ENCODE measurements at regions of chr7 and their contacts with region 1.

Region 1: DNA sequence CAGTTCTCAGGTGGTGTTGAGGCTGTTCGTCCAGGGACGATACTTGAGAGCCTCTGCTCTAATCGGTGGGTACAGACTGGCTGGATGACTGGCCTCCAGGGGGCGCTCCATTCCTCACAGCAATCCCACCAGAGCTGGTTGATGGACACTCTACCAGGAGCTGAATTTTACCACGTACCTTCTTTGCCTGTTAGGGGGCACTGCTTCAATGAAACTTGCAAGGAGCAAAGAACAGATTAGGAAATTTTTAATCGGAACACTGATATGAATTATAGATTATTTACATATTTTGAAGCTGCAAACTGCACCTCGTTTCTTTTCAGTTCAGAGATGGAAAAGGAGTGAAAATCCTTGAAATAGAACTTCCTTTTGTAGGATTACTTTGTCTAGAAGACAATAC is 44.9 kb downstream of the KBTBD2 start:
- DNase-seq: peak; percentile 97
- ATAC-seq: peak; percentile 100
- H3K4me3 Mint-ChIP-seq: no peak overlapping the region
- H3K27ac Mint-ChIP-seq: peak overlapping the region; percentile 4
- H3K4me1 Mint-ChIP-seq: peaks cover 10% of the 10 kb centered on the region
- H3K27me3 Mint-ChIP-seq: peaks cover 19% of the 10 kb centered on the region
- CTCF ChIP-seq: peak; percentile 92

Region 2: DNA sequence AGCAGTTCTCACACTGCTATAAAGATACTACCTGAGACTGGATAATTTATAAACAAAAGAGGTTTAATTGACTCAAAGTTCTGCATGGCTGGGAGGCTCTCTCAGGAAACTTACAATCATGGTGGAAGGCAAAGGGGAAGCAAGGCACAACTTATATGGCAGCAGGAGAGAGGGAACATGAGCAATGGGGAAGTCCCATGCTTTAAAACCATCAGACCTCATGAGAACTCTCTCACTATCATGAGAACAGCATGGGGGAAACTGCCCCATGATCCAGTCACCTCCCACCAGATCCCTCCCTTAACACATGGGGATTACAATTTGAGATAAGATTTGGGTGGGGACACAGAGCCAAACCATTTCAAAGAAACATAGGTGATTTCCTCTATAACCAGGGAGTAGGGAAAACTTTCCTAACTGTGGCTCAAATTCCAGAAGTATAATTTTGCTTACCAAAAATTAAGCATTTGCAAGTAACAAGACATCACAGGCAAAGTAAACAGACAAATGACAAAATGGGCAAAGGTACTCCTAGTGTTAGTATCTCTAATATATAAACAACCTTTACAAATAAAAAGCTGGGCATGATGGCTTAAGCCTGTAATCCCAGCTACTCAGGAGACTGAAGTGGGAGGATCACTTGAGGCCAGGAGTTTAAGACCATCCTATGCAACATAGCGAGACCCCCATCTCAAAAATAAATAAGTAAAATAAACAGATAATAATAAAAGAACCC is 43.1 kb before region 1 on chr7:
- CTCF ChIA-PET with region 1: interaction called, 13 read pairs
- POLR2A ChIA-PET with region 1: no interaction called
- intact Hi-C with region 1: no loop called
- DNase-seq: no peak
- ATAC-seq: no peak
- H3K4me3 Mint-ChIP-seq: no peak overlapping the region
- H3K27ac Mint-ChIP-seq: no peak overlapping the region
- H3K4me1 Mint-ChIP-seq: no peaks in the 10 kb centered on the region
- H3K27me3 Mint-ChIP-seq: peaks cover 3% of the 10 kb centered on the region
- CTCF ChIP-seq: no peak

Region 3: DNA sequence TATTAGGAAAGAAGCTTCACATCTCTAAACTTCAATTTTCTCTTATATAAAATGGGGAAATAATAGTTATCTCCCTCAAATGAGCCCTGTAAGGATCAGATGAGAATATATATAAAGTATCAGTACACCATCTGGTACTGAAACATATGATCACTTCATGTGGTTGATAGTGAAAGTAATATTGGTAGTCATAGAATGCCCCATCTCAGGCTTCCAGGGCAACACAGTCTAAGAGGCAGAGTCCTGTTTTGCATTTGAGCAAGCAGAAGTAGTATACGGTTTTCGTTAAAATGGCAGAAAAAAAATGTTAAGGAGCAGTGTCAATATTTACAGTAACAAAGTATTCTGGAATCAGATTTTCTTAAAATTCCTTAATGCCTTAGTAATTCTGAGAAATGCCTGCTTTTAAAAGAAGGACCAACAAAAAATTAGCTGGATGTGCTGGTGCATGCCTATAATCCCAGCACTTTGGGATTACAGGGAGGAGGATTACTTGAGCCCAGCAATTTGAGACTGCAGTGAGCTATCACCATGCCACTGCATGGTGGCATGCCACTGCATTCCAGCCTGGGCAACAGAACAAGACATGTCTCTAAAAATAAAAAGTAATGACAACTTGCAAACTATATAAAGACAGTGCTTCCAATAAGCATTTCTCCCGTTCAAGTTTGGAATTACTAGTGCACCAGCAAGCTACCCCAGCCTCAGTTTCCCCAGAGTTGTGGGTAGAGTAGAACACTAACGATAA is 25.1 kb after region 1 on chr7:
- CTCF ChIA-PET with region 1: interaction called, 47 read pairs
- POLR2A ChIA-PET with region 1: interaction called, 3 read pairs
- intact Hi-C with region 1: no loop called
- DNase-seq: no peak
- ATAC-seq: peak; percentile 74
- H3K4me3 Mint-ChIP-seq: no peak overlapping the region
- H3K27ac Mint-ChIP-seq: no peak overlapping the region
- H3K4me1 Mint-ChIP-seq: peaks cover 28% of the 10 kb centered on the region
- H3K27me3 Mint-ChIP-seq: no peaks in the 10 kb centered on the region
- CTCF ChIP-seq: no peak

Region 4: DNA sequence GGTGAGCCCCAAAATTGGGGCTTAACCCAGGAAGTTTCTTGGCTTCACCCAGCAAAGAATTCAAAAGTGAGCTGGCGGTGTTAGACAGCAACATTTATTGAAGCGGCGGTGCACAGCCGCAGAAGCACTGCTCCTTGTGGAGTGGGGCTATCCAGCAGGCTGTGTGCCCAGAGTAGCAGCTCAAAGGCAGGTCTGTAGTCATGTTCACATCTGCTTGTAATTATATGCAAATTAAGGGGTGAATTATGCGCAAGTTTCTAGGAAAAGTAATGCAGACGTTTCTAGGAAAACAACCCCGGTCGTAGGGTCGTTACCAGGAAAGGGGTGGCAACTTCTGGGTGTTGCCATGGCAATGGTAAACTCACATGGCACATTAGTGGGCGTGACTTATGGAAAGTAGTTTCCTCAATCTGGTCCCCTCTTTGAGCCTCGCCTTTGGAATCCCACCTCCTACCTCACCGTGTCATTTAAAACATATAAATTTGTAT is 58.5 kb after region 1 on chr7:
- CTCF ChIA-PET with region 1: interaction called, 30 read pairs
- POLR2A ChIA-PET with region 1: no interaction called
- intact Hi-C with region 1: no loop called
- DNase-seq: peak; percentile 91
- ATAC-seq: peak; percentile 93
- H3K4me3 Mint-ChIP-seq: peak overlapping the region; percentile 72
- H3K27ac Mint-ChIP-seq: peak overlapping the region; percentile 91
- H3K4me1 Mint-ChIP-seq: peaks cover 14% of the 10 kb centered on the region
- H3K27me3 Mint-ChIP-seq: no peaks in the 10 kb centered on the region
- CTCF ChIP-seq: no peak

Region 5: GRCh38 chr7:32948202-32948601 is 101.5 kb after region 1 on chr7:
- CTCF ChIA-PET with region 1: interaction called, 95 read pairs
- POLR2A ChIA-PET with region 1: interaction called, 4 read pairs
- intact Hi-C with region 1: loop called (anchors 2 kb)
- DNase-seq: no peak
- ATAC-seq: no peak
- H3K4me3 Mint-ChIP-seq: no peak overlapping the region
- H3K27ac Mint-ChIP-seq: no peak overlapping the region
- H3K4me1 Mint-ChIP-seq: no peaks in the 10 kb centered on the region
- H3K27me3 Mint-ChIP-seq: peaks cover 14% of the 10 kb centered on the region
- CTCF ChIP-seq: no peak

Region 6: GRCh38 chr7:33072471-33072870 is 225.8 kb after region 1 on chr7:
- CTCF ChIA-PET with region 1: interaction called, 11 read pairs
- POLR2A ChIA-PET with region 1: no interaction called
- intact Hi-C with region 1: no loop called
- DNase-seq: no peak
- ATAC-seq: no peak
- H3K4me3 Mint-ChIP-seq: no peak overlapping the region
- H3K27ac Mint-ChIP-seq: no peak overlapping the region
- H3K4me1 Mint-ChIP-seq: peaks cover 10% of the 10 kb centered on the region
- H3K27me3 Mint-ChIP-seq: peaks cover 15% of the 10 kb centered on the region
- CTCF ChIP-seq: no peak

Measured in activated CD8-positive, alpha-beta T cell treated with anti-CD3 and anti-CD28 coated beads for 36 hours (primary cell).